GM12878 (cell line): ENCODE measurements at regions of chr3 and their contacts with region 1.

Region 1: GRCh38 chr3:15557511-15557946 is 36.0 kb upstream of the COLQ start:
- DNase-seq: peak; percentile 67
- ATAC-seq: peak; percentile 88
- H3K4me3 ChIP-seq: no peak overlapping the region
- H3K27ac ChIP-seq: no peak overlapping the region
- H3K4me1 ChIP-seq: peaks cover 13% of the 10 kb centered on the region
- H3K27me3 ChIP-seq: no peaks in the 10 kb centered on the region
- CTCF ChIP-seq: peak; percentile 37 to 64 (median 55); a peak in 4 of 6 replicates
- EP300 ChIP-seq: no peak
- POLR2A ChIP-seq: no peak
- RAD21 ChIP-seq: peak; percentile 52

Region 2: DNA sequence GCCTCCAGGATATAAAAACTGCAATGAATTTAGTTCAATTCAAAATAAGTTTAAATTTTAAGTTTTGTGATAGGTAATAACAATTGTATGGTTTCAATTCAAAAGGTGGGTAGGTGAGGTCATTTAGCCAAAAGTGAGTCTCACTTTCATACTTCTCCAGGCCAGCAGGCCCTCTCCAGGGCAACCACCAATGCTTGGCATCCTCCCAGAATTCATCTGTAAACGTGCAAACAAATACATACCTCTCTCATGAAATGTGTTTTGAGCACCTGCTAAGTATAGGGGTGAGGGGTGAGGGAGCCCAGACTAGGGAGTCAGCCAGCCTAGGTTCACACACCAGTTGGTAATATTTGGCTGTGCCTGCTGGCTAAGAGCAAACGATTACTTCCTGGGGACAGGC is 436.5 kb before region 1 on chr3:
- CTCF ChIA-PET with region 1: interaction called, 4 read pairs
- POLR2A ChIA-PET with region 1: no interaction called
- RAD21 ChIA-PET with region 1: interaction called, 4 read pairs
- SMC1A ChIA-PET with region 1: interaction called, 3 read pairs
- in situ Hi-C with region 1: no loop called
- intact Hi-C with region 1: loop called (anchors 5 kb)
- DNase-seq: peak; percentile 24
- ATAC-seq: peak; percentile 87
- H3K4me3 ChIP-seq: no peak overlapping the region
- H3K27ac ChIP-seq: no peak overlapping the region
- H3K4me1 ChIP-seq: peaks cover 14% of the 10 kb centered on the region
- H3K27me3 ChIP-seq: no peaks in the 10 kb centered on the region
- CTCF ChIP-seq: no peak
- EP300 ChIP-seq: no peak
- POLR2A ChIP-seq: no peak
- RAD21 ChIP-seq: no peak

Region 3: DNA sequence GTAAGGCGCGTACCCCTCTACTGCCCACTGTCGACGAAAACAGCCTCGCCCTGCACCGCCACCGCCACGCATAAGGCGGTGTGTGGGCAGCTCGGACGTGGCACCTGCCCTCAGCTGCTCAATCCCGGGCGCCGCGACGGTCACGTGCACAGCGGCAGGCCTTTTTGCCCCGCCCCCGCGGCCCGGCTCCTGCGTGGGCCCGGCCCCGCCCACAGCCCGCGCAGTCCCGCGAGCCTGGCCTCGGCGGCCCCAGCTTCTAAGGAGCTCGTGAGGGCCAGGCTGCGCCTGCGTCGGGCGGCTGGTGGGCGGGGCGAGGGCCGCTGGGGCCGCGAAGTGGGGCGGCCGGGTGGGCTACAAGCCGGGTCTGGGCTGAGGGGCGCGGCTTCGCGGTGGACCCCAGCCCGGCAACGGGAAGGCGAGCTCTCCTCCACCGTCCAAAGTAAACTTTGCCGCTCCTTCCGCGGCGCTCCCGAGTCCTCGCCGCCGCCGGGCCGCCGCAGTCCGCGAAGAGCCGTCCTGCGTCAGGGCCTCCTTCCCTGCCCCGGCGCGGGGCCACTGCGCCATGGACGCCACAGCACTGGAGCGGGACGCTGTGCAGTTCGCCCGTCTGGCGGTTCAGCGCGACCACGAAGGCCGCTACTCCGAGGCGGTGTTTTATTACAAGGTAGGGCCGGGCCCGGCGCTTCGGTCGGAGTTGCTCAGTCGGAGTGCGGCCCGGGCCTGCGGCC is 351.4 kb before region 1 on chr3 and contains the start of gene CAPN7:
- CTCF ChIA-PET with region 1: interaction called, 51 read pairs
- POLR2A ChIA-PET with region 1: interaction called, 4 read pairs
- RAD21 ChIA-PET with region 1: interaction called, 7 read pairs
- SMC1A ChIA-PET with region 1: interaction called, 18 read pairs
- in situ Hi-C with region 1: no loop called
- intact Hi-C with region 1: loop called (anchors 1 kb)
- DNase-seq: peak; percentile 67
- ATAC-seq: peak; percentile 94
- H3K4me3 ChIP-seq: peak within 1 kb of the TSS; percentile 94
- H3K27ac ChIP-seq: peak within 1 kb of the TSS; percentile 61
- H3K4me1 ChIP-seq: no peaks in the 10 kb centered on the region
- H3K27me3 ChIP-seq: no peaks in the 10 kb centered on the region
- CTCF ChIP-seq: peak; percentile 39 to 40 (median 39); a peak in 4 of 6 replicates
- EP300 ChIP-seq: no peak
- POLR2A ChIP-seq: peak; percentile 95
- RAD21 ChIP-seq: no peak
- polyA plus RNA-seq, gene CAPN7: 5.3 to 6.7 TPM

Region 4: DNA sequence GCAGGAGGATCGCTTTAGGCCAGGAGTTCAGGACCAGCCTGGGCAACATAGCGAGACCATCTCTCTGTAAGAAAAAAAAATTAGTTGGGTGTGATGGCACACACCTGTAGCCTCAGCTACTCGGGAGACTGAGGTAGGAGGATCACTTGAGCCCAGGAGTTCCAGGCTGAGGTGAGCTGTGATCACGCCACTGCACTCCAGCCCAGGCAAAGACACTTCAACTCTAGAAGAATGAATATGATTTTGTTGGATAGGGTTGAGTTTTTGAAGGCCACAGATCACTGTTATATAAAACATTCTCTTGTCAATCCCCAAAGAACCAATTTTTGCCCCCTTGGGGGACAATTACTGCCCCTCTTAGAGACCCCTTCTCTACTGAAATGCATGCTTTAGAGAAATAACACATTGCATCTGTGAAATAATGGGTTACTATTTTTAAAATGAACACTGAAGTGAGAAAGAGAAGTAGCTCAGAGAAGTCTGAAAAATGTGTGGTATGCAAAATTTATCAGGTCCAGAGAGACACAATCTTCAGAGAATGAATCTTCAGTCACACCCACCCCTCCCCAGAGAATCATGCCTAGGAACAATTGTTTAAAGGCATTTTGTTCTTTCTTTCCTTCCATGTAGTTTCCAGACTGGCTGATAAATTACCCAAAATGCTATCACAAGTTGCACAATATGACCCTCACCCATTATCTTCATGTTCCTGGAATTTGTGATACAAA is 172.9 kb before region 1 on chr3:
- CTCF ChIA-PET with region 1: interaction called, 27 read pairs
- POLR2A ChIA-PET with region 1: interaction called, 7 read pairs
- RAD21 ChIA-PET with region 1: interaction called, 24 read pairs
- SMC1A ChIA-PET with region 1: interaction called, 21 read pairs
- in situ Hi-C with region 1: no loop called
- intact Hi-C with region 1: no loop called
- DNase-seq: peak; percentile 84
- ATAC-seq: peak; percentile 87
- H3K4me3 ChIP-seq: peak overlapping the region; percentile 48; the same call in 1 of the 2 replicates
- H3K27ac ChIP-seq: peak overlapping the region; percentile 93
- H3K4me1 ChIP-seq: peaks cover 66% of the 10 kb centered on the region
- H3K27me3 ChIP-seq: no peaks in the 10 kb centered on the region
- CTCF ChIP-seq: no peak
- EP300 ChIP-seq: peak; percentile 86 to 93
- POLR2A ChIP-seq: no peak
- RAD21 ChIP-seq: 0 out of 2 replicates have a peak, but pooled peaks have one; percentile 1

Region 5: GRCh38 chr3:15427182-15427880 is 130.2 kb before region 1 on chr3 and contains the starts of genes EAF1 and METTL6:
- CTCF ChIA-PET with region 1: interaction called, 28 read pairs
- POLR2A ChIA-PET with region 1: no interaction called
- RAD21 ChIA-PET with region 1: interaction called, 12 read pairs
- SMC1A ChIA-PET with region 1: interaction called, 26 read pairs
- in situ Hi-C with region 1: no loop called
- intact Hi-C with region 1: loop called (anchors 2 kb)
- DNase-seq: peak; percentile 38
- ATAC-seq: peak; percentile 88
- H3K4me3 ChIP-seq: peak within 1 kb of the TSS; percentile 95
- H3K27ac ChIP-seq: peak within 1 kb of the TSS; percentile 81
- H3K4me1 ChIP-seq: no peaks in the 10 kb centered on the region; the same call in 1 of the 2 replicates
- H3K27me3 ChIP-seq: no peaks in the 10 kb centered on the region
- CTCF ChIP-seq: peak in 1 of 3 experiments; percentile 15; a peak in 1 of 6 replicates
- EP300 ChIP-seq: 0 out of 4 replicates have a peak, but pooled peaks of 1 of the 2 experiments have one; percentile 10
- POLR2A ChIP-seq: peak; percentile 85
- RAD21 ChIP-seq: no peak
- polyA plus RNA-seq, gene EAF1: 6.8 to 9.2 TPM
- polyA plus RNA-seq, gene METTL6: 27.4 to 29.6 TPM

Region 6: DNA sequence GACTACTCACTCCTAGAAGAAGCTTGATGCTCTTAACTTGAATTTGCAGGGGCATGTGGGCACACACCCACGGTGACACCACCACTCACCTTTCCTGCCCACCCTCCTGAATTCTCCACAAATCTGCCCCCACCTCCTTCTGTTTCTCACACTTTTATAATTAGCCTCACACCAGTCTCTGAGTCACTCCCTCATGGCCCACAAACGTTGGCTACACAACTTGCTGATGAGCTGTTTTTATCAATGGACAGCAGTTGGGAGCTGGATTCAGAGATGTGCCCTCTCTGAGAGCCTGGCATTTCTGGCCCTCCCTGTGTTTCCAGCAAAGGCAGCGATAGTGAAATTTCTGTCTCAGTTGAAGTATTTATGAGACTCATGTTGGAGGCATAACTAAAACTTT is 37.3 kb before region 1 on chr3:
- CTCF ChIA-PET with region 1: interaction called, 72 read pairs
- POLR2A ChIA-PET with region 1: no interaction called
- RAD21 ChIA-PET with region 1: interaction called, 22 read pairs
- SMC1A ChIA-PET with region 1: interaction called, 58 read pairs
- in situ Hi-C with region 1: no loop called
- intact Hi-C with region 1: no loop called
- DNase-seq: no peak
- ATAC-seq: no peak
- H3K4me3 ChIP-seq: no peak overlapping the region
- H3K27ac ChIP-seq: no peak overlapping the region
- H3K4me1 ChIP-seq: no peaks in the 10 kb centered on the region
- H3K27me3 ChIP-seq: no peaks in the 10 kb centered on the region
- CTCF ChIP-seq: no peak
- EP300 ChIP-seq: no peak
- POLR2A ChIP-seq: no peak
- RAD21 ChIP-seq: no peak

Region 7: DNA sequence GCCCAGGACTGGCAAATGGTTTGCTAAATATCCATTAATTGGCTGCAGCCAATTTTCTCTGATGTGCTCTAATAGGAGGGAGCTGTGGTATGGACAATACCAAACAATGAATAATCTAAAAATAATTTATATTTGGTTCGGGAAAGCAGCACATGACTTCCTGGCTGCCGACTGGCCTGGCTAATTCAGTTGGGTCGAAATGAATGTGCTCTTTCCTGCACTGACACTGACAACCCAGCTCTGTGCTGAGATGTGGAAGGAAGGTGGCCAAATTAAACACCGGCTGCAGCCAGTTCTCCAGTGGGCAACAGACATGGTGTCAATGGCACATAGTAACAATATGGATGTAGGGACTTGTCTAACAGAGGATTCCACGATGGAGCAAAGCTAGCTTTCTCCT is 14.9 kb before region 1 on chr3:
- CTCF ChIA-PET with region 1: interaction called, 10 read pairs
- POLR2A ChIA-PET with region 1: no interaction called
- RAD21 ChIA-PET with region 1: interaction called, 5 read pairs
- SMC1A ChIA-PET with region 1: interaction called, 4 read pairs
- in situ Hi-C with region 1: no loop called
- intact Hi-C with region 1: no loop called
- DNase-seq: no peak
- ATAC-seq: no peak
- H3K4me3 ChIP-seq: no peak overlapping the region
- H3K27ac ChIP-seq: no peak overlapping the region
- H3K4me1 ChIP-seq: no peaks in the 10 kb centered on the region
- H3K27me3 ChIP-seq: no peaks in the 10 kb centered on the region
- CTCF ChIP-seq: no peak
- EP300 ChIP-seq: no peak
- POLR2A ChIP-seq: no peak
- RAD21 ChIP-seq: no peak